ENCODE measurements at regions of chr2 and their contacts with region 1.

Region 1: GRCh38 chr2:69683101-69683971 is 39.8 kb upstream of the AAK1 start:
- DNase-seq: no peak
- ATAC-seq: no peak
- H3K4me3 ChIP-seq: no peak overlapping the region
- H3K4me3 Mint-ChIP-seq: peak overlapping the region; percentile 60 to 85 (median 76)
- H3K27ac ChIP-seq: peak overlapping the region; percentile 25
- H3K27ac Mint-ChIP-seq: peak overlapping the region; percentile 76 to 93 (median 89)
- H3K4me1 ChIP-seq: peaks cover 18 to 42% of the 10 kb centered on the region in 2 donors
- H3K4me1 Mint-ChIP-seq: peaks cover 32 to 89% (median 75%) of the 10 kb centered on the region in 7 donors
- H3K27me3 ChIP-seq: no peaks in the 10 kb centered on the region
- H3K27me3 Mint-ChIP-seq: no peaks in the 10 kb centered on the region

Region 2: GRCh38 chr2:69581774-69582581 is 101.4 kb before region 1 on chr2:
- CTCF ChIA-PET with region 1: no interaction called
- POLR2A ChIA-PET with region 1: no interaction called
- intact Hi-C with region 1: no loop called
- DNase-seq: peak in 4 of 9 donors; percentile 15 to 27 (median 24)
- ATAC-seq: peak; percentile 41
- H3K4me3 ChIP-seq: no peak overlapping the region
- H3K4me3 Mint-ChIP-seq: peak overlapping the region; percentile 26 to 82 (median 75)
- H3K27ac ChIP-seq: peak overlapping the region; percentile 34
- H3K27ac Mint-ChIP-seq: peak overlapping the region in 8 of 9 donors; percentile 30 to 94 (median 87)
- H3K4me1 ChIP-seq: peaks cover 42 to 87% of the 10 kb centered on the region in 2 donors
- H3K4me1 Mint-ChIP-seq: peaks cover 73 to 98% (median 96%) of the 10 kb centered on the region in 7 donors
- H3K27me3 ChIP-seq: no peaks in the 10 kb centered on the region
- H3K27me3 Mint-ChIP-seq: no peaks in the 10 kb centered on the region

Region 3: DNA sequence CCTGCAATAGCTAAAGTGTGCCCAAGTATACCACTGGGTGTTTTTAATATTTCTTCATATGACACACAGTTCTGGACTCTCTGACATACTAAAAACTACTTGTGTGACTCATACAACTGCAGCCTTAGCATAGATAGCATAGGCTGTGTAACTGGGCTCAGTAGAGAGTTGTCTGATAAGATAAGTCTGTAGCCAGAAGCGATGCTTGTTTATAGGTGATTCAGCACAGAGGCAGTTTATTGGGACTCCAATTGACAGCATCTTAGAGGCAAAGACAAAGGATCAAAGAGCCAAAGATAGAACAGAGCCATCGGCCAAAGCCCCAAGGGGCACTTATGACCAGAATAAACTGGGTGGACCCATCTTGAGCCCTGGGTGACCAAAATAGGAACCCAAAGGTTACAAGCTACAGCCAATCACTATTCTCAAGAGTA is 82.1 kb before region 1 on chr2:
- CTCF ChIA-PET with region 1: no interaction called
- POLR2A ChIA-PET with region 1: no interaction called
- intact Hi-C with region 1: no loop called
- DNase-seq: no peak
- ATAC-seq: peak; percentile 69
- H3K4me3 ChIP-seq: no peak overlapping the region
- H3K4me3 Mint-ChIP-seq: peak overlapping the region in 9 of 10 donors; percentile 16 to 73 (median 48)
- H3K27ac ChIP-seq: peak overlapping the region; percentile 47
- H3K27ac Mint-ChIP-seq: peak overlapping the region; percentile 25 to 93 (median 71)
- H3K4me1 ChIP-seq: peaks cover 42 to 66% of the 10 kb centered on the region in 2 donors
- H3K4me1 Mint-ChIP-seq: peaks cover 74 to 97% (median 91%) of the 10 kb centered on the region in 7 donors
- H3K27me3 ChIP-seq: no peaks in the 10 kb centered on the region
- H3K27me3 Mint-ChIP-seq: no peaks in the 10 kb centered on the region

Region 4: DNA sequence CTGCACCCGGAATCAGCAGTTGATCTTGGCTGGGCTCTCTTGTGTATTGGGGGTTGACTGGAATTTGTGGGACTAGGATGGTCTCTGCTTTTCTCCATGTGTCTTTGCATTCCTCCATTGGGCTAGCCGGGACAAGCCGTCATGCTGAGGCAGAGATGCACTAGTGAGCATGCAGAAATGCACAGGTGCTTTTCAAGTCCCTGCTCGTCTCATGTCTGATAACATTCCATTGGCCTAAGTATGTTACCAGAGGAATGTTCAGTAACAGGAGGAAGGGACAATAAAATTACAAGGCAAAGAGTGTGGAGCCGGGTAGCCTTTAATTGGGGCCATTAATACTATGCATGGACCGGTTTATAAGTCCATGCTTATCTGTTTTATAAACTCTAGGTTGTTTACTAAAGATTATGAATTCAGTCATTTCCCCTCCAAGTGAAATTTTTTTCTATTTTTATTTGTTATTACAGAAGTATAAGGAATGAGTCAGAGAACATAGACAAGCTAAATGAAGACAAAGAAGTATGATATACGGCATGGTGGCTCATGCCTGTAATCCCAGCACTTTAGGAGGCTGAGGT is 15.4 kb before region 1 on chr2:
- CTCF ChIA-PET with region 1: no interaction called
- POLR2A ChIA-PET with region 1: interaction called, 4 read pairs
- intact Hi-C with region 1: loop called in 1 of 2 experiments (anchors 2 kb)
- DNase-seq: no peak
- ATAC-seq: no peak
- H3K4me3 ChIP-seq: no peak overlapping the region
- H3K4me3 Mint-ChIP-seq: peak overlapping the region in 2 of 10 donors; percentile 14 to 36
- H3K27ac ChIP-seq: no peak overlapping the region
- H3K27ac Mint-ChIP-seq: peak overlapping the region in 2 of 9 donors; percentile 3 to 13
- H3K4me1 ChIP-seq: peaks cover 0 to 7% of the 10 kb centered on the region in 2 donors
- H3K4me1 Mint-ChIP-seq: peaks cover 8 to 40% (median 18%) of the 10 kb centered on the region in 7 donors
- H3K27me3 ChIP-seq: no peaks in the 10 kb centered on the region
- H3K27me3 Mint-ChIP-seq: no peaks in the 10 kb centered on the region

Measured in naive thymus-derived CD4-positive, alpha-beta T cell (primary cell).